Heart left ventricle (tissue), 16 donors: ENCODE measurements at regions of chr15 and their contacts with region 1.

Region 1: GRCh38 chr15:30073915-30074314 is 8.8 kb upstream of the GOLGA8J start:
- DNase-seq: no peak
- ATAC-seq: no peak
- H3K4me3 ChIP-seq: no peak overlapping the region
- H3K27ac ChIP-seq: no peak overlapping the region
- H3K4me1 ChIP-seq: no peaks in the 10 kb centered on the region
- H3K27me3 ChIP-seq: peaks cover 0 to 6% (median 0%) of the 10 kb centered on the region in 9 donors
- CTCF ChIP-seq: no peak
- POLR2A ChIP-seq: no peak

Region 2: DNA sequence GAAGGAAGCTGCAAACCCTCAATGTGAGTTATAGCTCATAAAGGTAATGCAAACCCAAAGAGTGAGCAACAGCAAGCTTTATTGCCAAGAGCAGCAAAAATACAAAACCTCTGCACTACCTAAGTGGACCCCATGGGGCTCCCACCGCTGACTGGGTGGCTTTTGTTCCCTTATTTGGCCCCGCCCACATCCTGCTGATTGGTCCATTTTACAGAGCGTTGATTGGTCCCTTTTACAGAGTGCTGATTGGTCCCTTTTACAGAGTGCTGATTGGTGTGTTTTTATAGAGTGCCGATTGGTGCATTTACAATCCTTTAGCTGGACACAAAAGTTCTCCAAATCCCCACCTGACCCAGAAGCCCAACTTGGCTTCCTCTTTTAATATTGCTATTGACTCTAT is 649.8 kb before region 1 on chr15:
- intact Hi-C with region 1: no loop called
- DNase-seq: no peak
- ATAC-seq: no peak
- H3K4me3 ChIP-seq: no peak overlapping the region
- H3K27ac ChIP-seq: no peak overlapping the region
- H3K4me1 ChIP-seq: no peaks in the 10 kb centered on the region
- H3K27me3 ChIP-seq: no peaks in the 10 kb centered on the region
- CTCF ChIP-seq: no peak
- POLR2A ChIP-seq: no peak

Region 3: DNA sequence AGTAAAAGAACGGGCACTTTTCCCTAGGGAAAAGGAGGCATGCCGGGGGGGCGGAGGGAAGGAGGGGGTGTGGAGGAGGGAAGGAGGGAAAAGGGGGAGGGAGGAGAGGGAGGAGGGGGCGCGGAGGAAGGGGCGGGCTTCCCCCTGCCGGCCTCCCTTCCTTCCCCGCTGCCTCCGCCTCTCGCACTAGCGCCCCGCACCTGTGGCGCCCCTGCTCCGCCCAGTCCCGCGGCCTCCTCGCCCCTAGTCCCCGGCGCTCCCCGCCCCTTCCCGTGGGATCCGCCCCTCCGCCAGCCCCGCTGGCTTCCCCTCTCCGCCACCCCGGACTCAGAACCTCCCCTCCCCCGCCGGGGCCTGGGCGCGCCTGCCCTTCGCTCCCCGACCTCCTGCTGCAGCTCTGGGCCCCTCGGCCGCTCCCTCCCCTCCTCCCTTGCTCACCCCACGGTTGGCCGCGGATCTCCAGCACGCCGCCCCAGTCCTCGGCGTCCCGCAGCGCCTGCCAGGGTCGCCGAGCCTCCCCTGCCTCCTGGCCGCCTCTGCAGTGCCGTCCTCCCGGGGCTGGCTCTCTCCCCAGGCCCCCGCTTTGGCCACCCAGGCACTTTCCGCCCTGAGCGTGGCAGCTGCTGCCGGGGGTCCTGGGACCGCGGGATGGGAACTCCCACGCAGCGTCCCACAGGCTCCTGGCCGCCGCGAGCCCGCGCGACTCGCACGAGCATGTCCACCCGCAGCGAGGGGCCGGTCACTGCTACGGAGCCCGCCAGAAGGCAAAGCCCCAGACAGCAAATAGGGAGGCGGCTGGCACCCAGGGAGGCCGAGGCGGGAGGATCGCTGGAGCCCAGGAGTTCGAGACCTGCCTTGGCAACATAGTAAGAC is 399.0 kb before region 1 on chr15:
- intact Hi-C with region 1: loop called in 1 of 10 experiments (anchors 10 kb)
- DNase-seq: peak; percentile 35 to 73 (median 45)
- ATAC-seq: peak in 3 of 4 donors; percentile 55 to 78 (median 72)
- H3K4me3 ChIP-seq: peak overlapping the region; percentile 46 to 64 (median 58)
- H3K27ac ChIP-seq: no peak overlapping the region
- H3K4me1 ChIP-seq: peaks cover 0 to 13% (median 0%) of the 10 kb centered on the region in 12 donors
- H3K27me3 ChIP-seq: peaks cover 0 to 20% (median 0%) of the 10 kb centered on the region in 9 donors
- CTCF ChIP-seq: no peak
- POLR2A ChIP-seq: no peak

Region 4: GRCh38 chr15:29935276-29936020 is 138.5 kb before region 1 on chr15:
- intact Hi-C with region 1: loop called in 1 of 10 experiments (anchors 5 kb)
- DNase-seq: no peak
- ATAC-seq: peak in 3 of 4 donors; percentile 70 to 81 (median 73)
- H3K4me3 ChIP-seq: no peak overlapping the region
- H3K27ac ChIP-seq: no peak overlapping the region
- H3K4me1 ChIP-seq: peaks cover 0 to 6% (median 0%) of the 10 kb centered on the region in 12 donors
- H3K27me3 ChIP-seq: no peaks in the 10 kb centered on the region
- CTCF ChIP-seq: peak in 9 of 12 donors; percentile 7 to 49 (median 32)
- POLR2A ChIP-seq: no peak

Region 5: GRCh38 chr15:29952225-29952624 is 121.7 kb before region 1 on chr15:
- intact Hi-C with region 1: loop called in 1 of 10 experiments (anchors 10 kb)
- DNase-seq: no peak
- ATAC-seq: no peak
- H3K4me3 ChIP-seq: no peak overlapping the region
- H3K27ac ChIP-seq: no peak overlapping the region
- H3K4me1 ChIP-seq: no peaks in the 10 kb centered on the region
- H3K27me3 ChIP-seq: no peaks in the 10 kb centered on the region
- CTCF ChIP-seq: no peak
- POLR2A ChIP-seq: no peak

Region 6: DNA sequence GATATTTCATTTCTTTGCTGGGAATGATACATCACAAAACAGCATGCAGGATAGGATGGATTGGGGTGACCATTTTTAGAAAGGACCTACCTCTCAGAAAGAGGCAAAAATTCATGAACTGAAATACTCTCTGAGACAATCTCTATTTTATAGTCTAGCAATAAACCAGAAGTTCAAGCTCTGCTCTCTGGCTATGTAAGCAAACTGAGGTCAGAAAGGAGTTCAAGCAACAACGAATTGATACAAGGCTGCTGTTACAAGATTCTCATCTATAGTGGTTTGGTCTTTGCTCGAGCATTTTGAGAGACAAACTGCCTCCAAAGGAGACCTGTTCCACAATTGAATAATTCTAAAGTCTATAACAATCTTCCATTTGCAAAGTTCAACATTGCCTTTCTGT is 75.9 kb before region 1 on chr15:
- intact Hi-C with region 1: no loop called
- DNase-seq: no peak
- ATAC-seq: no peak
- H3K4me3 ChIP-seq: no peak overlapping the region
- H3K27ac ChIP-seq: no peak overlapping the region
- H3K4me1 ChIP-seq: no peaks in the 10 kb centered on the region
- H3K27me3 ChIP-seq: no peaks in the 10 kb centered on the region
- CTCF ChIP-seq: no peak
- POLR2A ChIP-seq: no peak